Activated CD4-positive, alpha-beta memory T cell treated with anti-CD3 and anti-CD28 coated beads for 36 hours (primary cell): ENCODE measurements at regions of chr18 and their contacts with region 1.

Region 1: DNA sequence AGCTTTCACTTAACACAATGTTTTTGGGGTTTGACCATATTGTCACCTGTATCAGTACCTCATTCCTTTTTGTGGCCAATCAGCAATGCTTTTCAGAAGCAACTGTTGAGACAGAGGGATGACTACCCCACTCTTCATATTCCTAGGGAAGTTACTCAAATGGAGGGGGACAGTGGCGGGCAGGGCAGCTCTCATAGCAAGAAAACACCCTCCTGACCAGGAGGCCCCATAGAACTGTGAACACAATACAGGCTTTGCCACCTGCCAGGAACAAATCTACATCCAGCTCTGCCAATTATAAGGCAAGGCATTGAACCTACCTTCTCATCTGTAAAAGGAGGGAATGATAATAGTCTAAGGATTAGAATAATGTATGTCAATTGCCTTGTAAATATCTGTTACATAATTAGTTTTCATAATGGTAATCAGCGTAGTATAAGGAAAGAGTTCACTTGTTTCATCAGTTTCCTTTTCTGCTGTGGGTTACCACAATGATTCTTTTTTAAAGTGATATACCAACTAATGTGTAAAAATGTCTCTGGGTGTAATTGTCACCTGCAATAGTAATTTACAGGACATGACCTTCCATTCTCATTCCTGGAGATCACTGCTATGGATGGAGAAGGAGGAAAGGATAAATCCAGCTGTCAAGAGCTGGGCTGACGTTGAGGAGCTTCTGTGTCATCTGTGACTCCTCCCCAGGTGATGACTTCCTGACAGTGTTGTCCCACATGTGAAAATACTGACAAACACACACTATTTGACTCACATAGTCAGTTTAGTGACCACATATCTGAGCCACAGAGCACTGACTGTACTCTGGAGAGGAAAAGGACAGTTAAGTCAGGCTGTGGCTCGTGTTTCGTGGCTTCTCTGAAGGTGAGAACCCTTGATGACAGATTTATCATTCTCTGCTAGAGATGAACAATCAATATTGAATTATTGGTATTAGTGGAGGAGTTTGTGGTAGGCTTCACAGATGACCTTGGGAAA is 13.5 kb downstream of the ALPK2 start:
- DNase-seq: peak; percentile 87
- H3K4me3 Mint-ChIP-seq: peak overlapping the region; percentile 51
- H3K27ac Mint-ChIP-seq: peak overlapping the region; percentile 90
- H3K4me1 Mint-ChIP-seq: peaks cover 54% of the 10 kb centered on the region
- H3K27me3 Mint-ChIP-seq: peaks cover 4% of the 10 kb centered on the region

Region 2: GRCh38 chr18:58402247-58402646 is 213.2 kb before region 1 on chr18:
- CTCF ChIA-PET with region 1: no interaction called
- POLR2A ChIA-PET with region 1: no interaction called
- intact Hi-C with region 1: loop called (anchors 5 kb)
- DNase-seq: no peak
- H3K4me3 Mint-ChIP-seq: no peak overlapping the region
- H3K27ac Mint-ChIP-seq: no peak overlapping the region
- H3K4me1 Mint-ChIP-seq: peaks cover 15% of the 10 kb centered on the region
- H3K27me3 Mint-ChIP-seq: peaks cover 2% of the 10 kb centered on the region

Region 3: DNA sequence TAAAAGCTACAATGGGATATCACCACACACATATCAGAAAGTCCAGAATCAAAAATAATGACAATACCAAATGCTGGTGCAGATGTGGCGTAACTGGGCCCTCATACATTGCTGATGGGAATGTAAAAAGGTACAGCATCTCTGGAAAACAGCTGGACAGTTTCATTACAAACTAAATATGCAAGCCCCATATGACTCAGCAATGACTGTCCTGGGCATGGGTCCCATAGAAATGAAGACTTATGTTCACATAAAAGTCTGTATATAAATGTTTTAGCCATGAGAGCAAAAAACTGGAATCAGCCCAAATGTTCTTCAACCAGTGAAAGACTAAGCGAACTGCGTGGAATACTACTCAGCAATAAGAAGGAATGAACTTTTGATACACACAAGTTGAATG is 43.3 kb before region 1 on chr18:
- CTCF ChIA-PET with region 1: no interaction called
- POLR2A ChIA-PET with region 1: no interaction called
- intact Hi-C with region 1: loop called (anchors 2 kb)
- DNase-seq: no peak
- H3K4me3 Mint-ChIP-seq: no peak overlapping the region
- H3K27ac Mint-ChIP-seq: no peak overlapping the region
- H3K4me1 Mint-ChIP-seq: peaks cover 15% of the 10 kb centered on the region
- H3K27me3 Mint-ChIP-seq: no peaks in the 10 kb centered on the region

Region 4: GRCh38 chr18:58605027-58606020 is 10.1 kb before region 1 on chr18:
- CTCF ChIA-PET with region 1: interaction called, 3 read pairs
- POLR2A ChIA-PET with region 1: interaction called, 8 read pairs
- intact Hi-C with region 1: loop called (anchors 1 kb)
- DNase-seq: peak; percentile 72
- H3K4me3 Mint-ChIP-seq: no peak overlapping the region
- H3K27ac Mint-ChIP-seq: peak overlapping the region; percentile 39
- H3K4me1 Mint-ChIP-seq: peaks cover 61% of the 10 kb centered on the region
- H3K27me3 Mint-ChIP-seq: no peaks in the 10 kb centered on the region

Region 5: GRCh38 chr18:58649966-58650816 is 34.8 kb after region 1 on chr18:
- CTCF ChIA-PET with region 1: interaction called, 3 read pairs
- POLR2A ChIA-PET with region 1: interaction called, 4 read pairs
- intact Hi-C with region 1: loop called (anchors 1 kb)
- DNase-seq: peak; percentile 44
- H3K4me3 Mint-ChIP-seq: no peak overlapping the region
- H3K27ac Mint-ChIP-seq: peak overlapping the region; percentile 43
- H3K4me1 Mint-ChIP-seq: peaks cover 57% of the 10 kb centered on the region
- H3K27me3 Mint-ChIP-seq: no peaks in the 10 kb centered on the region

Region 6: DNA sequence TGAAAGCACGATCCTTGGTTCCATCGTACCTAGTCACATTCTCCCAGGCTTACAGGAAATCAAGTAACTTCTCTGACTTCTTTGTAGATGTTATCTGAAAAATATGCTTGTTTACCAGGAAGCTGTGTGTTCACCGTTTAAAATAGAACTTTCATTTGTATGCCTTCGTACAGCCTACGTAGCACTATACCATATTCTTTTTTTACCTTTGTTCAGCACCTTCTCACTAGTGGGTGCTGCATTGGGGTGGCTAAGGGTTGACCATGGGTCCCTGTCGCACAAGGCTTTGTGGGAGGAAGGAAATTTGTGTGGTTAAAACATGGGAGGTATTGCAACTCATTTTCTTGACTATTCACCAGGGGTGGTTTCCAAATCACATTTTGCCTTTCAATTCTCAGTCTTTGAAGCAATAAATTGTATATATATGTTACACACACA is 72.5 kb after region 1 on chr18:
- CTCF ChIA-PET with region 1: interaction called, 6 read pairs
- POLR2A ChIA-PET with region 1: no interaction called
- intact Hi-C with region 1: loop called (anchors 2 kb)
- DNase-seq: peak; percentile 74
- H3K4me3 Mint-ChIP-seq: peak overlapping the region; percentile 63
- H3K27ac Mint-ChIP-seq: peak overlapping the region; percentile 84
- H3K4me1 Mint-ChIP-seq: peaks cover 64% of the 10 kb centered on the region
- H3K27me3 Mint-ChIP-seq: no peaks in the 10 kb centered on the region